ENCODE measurements at regions of chr21 and their contacts with region 1.

Region 1: DNA sequence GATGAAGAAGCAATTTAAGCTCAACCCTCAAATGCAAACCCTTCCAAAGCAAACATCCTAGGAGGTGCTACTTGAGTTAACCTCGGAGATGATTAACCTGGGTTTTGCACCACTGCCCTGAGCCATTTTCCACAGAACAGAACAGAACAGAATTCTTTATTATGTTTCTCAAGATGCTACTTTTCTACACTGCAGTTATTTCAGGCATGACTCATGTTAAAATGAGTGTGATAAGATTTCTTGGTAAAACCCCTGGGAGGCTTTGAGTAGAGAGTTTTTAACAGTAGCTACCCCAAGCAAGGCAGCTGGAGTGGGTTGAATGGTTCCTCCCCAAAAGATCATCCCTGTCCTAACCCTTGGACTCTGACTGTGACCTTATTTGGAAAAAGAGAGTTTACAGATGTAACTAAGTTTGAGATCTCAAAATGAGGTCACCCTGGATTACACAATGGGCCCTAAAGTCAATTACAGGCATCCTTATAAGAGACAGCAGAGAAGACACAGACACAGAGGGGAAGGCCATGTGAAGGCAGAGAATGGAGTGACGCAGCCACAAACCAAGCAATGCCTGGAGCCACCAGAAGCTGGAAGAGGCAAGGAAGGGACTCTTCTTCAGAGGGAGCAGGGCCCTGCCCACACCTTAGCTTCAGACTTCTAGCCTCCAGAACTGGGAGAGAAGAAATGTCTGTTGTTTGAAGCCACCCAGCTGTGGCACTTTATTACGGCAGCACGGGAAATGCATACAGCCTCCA is 153.4 kb downstream of the ETS2 start:
- DNase-seq: peak; percentile 49
- H3K4me3 Mint-ChIP-seq: no peak overlapping the region
- H3K27ac Mint-ChIP-seq: peak overlapping the region; percentile 86
- H3K4me1 Mint-ChIP-seq: peaks cover 31% of the 10 kb centered on the region
- H3K27me3 Mint-ChIP-seq: no peaks in the 10 kb centered on the region
- CTCF ChIP-seq: no peak

Region 2: GRCh38 chr21:38596264-38597042 is 362.7 kb before region 1 on chr21:
- CTCF ChIA-PET with region 1: no interaction called
- POLR2A ChIA-PET with region 1: no interaction called
- intact Hi-C with region 1: no loop called
- DNase-seq: no peak
- H3K4me3 Mint-ChIP-seq: no peak overlapping the region
- H3K27ac Mint-ChIP-seq: no peak overlapping the region
- H3K4me1 Mint-ChIP-seq: no peaks in the 10 kb centered on the region
- H3K27me3 Mint-ChIP-seq: peaks cover 82% of the 10 kb centered on the region
- CTCF ChIP-seq: no peak

Region 3: DNA sequence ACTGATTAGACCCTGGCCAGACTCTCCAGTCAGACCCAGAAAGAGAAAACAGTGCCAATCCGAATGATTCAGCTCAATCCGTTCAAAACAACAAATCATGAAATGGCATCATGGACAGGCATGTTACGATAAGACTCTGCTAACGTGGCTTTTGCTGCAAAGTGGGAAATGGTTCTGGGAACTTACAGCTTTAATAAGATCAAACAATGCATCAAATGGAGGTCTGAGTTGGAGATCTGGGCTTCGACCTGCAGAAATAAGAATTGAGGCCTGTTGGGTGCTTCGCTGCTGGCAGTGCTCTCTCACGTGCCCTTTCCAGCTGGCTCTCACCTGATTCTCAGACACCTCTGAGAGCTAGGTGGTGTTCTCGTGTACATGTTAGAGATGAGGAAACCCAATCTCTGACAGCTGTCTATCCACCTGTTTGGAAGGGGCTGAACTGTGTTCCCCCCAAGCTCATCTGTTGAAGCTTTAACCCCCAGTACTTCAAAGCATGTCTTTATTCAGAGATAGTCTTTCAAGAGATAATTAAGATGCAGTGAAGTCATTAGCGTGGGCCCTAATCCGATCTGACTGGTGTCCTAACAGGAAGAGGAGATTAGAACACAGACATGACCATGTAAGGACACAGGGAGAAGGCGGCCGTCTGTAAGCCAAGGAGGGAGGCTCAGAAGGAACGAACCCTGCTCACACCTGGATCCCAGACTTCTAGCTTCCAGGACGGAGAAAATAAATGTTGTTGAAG is 198.9 kb before region 1 on chr21:
- CTCF ChIA-PET with region 1: no interaction called
- POLR2A ChIA-PET with region 1: no interaction called
- intact Hi-C with region 1: no loop called
- DNase-seq: no peak
- H3K4me3 Mint-ChIP-seq: no peak overlapping the region
- H3K27ac Mint-ChIP-seq: no peak overlapping the region
- H3K4me1 Mint-ChIP-seq: peaks cover 16% of the 10 kb centered on the region
- H3K27me3 Mint-ChIP-seq: no peaks in the 10 kb centered on the region
- CTCF ChIP-seq: no peak

Region 4: GRCh38 chr21:38913120-38913892 is 45.8 kb before region 1 on chr21:
- CTCF ChIA-PET with region 1: interaction called, 3 read pairs
- POLR2A ChIA-PET with region 1: interaction called, 5 read pairs
- intact Hi-C with region 1: loop called (anchors 2 kb)
- DNase-seq: peak; percentile 92
- H3K4me3 Mint-ChIP-seq: no peak overlapping the region
- H3K27ac Mint-ChIP-seq: no peak overlapping the region
- H3K4me1 Mint-ChIP-seq: peaks cover 9% of the 10 kb centered on the region
- H3K27me3 Mint-ChIP-seq: no peaks in the 10 kb centered on the region
- CTCF ChIP-seq: no peak

Region 5: GRCh38 chr21:38979228-38980121 is 20.4 kb after region 1 on chr21:
- CTCF ChIA-PET with region 1: no interaction called
- POLR2A ChIA-PET with region 1: interaction called, 10 read pairs
- intact Hi-C with region 1: no loop called
- DNase-seq: peak; percentile 22
- H3K4me3 Mint-ChIP-seq: no peak overlapping the region
- H3K27ac Mint-ChIP-seq: peak overlapping the region; percentile 4
- H3K4me1 Mint-ChIP-seq: peaks cover 14% of the 10 kb centered on the region
- H3K27me3 Mint-ChIP-seq: no peaks in the 10 kb centered on the region
- CTCF ChIP-seq: no peak

Region 6: DNA sequence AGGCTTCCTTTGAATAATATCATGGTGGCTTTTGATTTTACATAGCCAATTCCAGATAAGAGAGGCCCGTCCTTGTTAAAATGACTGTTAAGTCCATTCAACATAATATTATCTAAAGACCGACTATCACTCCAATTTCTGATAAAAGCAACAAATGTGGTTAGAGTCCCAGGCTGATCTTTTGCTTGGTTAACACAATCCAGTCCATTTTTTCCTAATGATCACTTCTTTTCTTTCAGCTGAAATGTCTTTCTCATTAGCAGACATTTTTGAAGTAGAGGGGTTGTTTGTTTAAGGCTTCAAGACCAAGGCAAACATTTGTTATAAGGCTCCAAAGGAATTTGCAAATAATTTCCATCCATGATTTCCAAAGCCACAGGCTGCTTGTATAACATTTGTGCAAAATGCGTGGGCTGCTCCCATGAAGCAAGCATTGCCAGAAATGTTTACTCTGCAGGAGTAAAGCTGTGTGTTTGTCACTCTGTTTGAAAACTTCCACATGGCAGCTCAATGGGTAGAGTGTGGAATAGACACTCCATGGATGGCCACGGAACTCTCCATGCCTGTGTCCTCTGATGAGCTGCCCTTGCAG is 112.6 kb after region 1 on chr21:
- CTCF ChIA-PET with region 1: no interaction called
- POLR2A ChIA-PET with region 1: no interaction called
- intact Hi-C with region 1: no loop called
- DNase-seq: no peak
- H3K4me3 Mint-ChIP-seq: no peak overlapping the region
- H3K27ac Mint-ChIP-seq: no peak overlapping the region
- H3K4me1 Mint-ChIP-seq: no peaks in the 10 kb centered on the region
- H3K27me3 Mint-ChIP-seq: no peaks in the 10 kb centered on the region
- CTCF ChIP-seq: no peak

Region 7: DNA sequence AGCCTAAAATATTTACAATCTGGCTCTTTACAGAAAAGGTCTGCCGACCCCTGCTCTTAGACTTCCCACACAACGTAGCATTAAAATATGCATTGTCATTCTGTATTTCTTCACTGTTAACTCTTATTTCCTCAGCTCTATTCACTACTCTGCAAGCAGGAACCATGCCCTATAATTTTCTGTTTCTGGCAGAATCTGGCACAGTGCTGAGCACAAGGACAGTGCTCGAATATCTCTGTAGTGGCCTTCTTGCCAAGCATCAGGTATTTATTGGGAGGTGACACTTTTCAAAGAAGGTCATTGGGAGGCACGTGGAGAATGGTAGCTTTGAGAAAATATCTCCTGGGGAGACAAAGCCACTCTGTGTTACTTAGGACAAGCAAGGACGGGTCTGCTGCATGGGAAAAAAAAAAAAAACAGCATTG is 146.2 kb after region 1 on chr21:
- CTCF ChIA-PET with region 1: no interaction called
- POLR2A ChIA-PET with region 1: no interaction called
- intact Hi-C with region 1: no loop called
- DNase-seq: no peak
- H3K4me3 Mint-ChIP-seq: no peak overlapping the region
- H3K27ac Mint-ChIP-seq: no peak overlapping the region
- H3K4me1 Mint-ChIP-seq: peaks cover 6% of the 10 kb centered on the region
- H3K27me3 Mint-ChIP-seq: no peaks in the 10 kb centered on the region
- CTCF ChIP-seq: no peak